Activated B cell treated with CpG ODN at 0.5 μM for 24 hours (primary cell): ENCODE measurements at regions of chr3 and their contacts with region 1.

Region 1: DNA sequence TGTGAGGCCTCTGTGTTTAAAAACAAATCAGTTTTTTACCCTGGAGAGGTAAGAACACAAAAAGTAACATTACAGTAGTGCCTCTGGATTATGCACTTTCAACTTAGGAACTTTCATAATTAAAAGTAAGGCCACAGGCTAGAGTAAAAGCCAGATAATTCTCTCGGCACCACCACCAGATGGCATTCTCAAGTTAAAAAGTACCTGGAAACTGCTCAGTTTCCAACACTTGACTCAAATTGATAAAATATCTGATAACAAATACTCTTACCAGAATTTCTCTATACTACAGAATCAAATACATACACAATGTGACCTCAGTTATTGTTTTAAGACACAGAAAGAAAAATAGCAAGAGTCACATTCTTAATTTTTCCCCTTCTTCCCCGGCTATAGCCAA is 19.9 kb downstream of the SPICE1 start:
- DNase-seq: no peak
- ATAC-seq: no peak
- H3K4me3 Mint-ChIP-seq: no peak overlapping the region
- H3K27ac Mint-ChIP-seq: no peak overlapping the region
- H3K4me1 Mint-ChIP-seq: no peaks in the 10 kb centered on the region
- H3K27me3 Mint-ChIP-seq: no peaks in the 10 kb centered on the region
- CTCF ChIP-seq: no peak

Region 2: GRCh38 chr3:113051302-113051711 is 443.7 kb before region 1 on chr3:
- CTCF ChIA-PET with region 1: no interaction called
- POLR2A ChIA-PET with region 1: no interaction called
- intact Hi-C with region 1: loop called (anchors 2 kb)
- DNase-seq: peak; percentile 68
- ATAC-seq: peak; percentile 99
- H3K4me3 Mint-ChIP-seq: no peak overlapping the region
- H3K27ac Mint-ChIP-seq: no peak overlapping the region
- H3K4me1 Mint-ChIP-seq: peaks cover 3% of the 10 kb centered on the region
- H3K27me3 Mint-ChIP-seq: no peaks in the 10 kb centered on the region
- CTCF ChIP-seq: no peak

Region 3: DNA sequence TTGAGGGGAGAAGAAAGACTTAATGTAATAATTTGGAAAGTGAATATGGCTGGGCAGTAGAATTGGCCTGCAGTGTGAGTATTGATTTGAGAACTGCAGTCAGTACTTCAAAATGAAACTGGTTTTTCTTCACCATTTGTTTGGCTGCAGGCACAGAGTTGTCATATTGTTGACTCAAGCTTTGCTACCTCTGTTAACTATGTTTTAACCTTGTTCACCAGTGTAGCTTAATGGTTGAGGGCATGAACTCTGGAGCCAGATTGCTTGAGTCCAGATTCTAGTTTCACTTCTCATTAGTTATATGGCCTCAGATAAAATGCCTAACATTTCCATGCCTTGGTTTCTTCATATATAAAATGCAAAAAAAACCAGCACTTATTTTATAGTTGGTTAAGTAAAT is 117.9 kb before region 1 on chr3:
- CTCF ChIA-PET with region 1: no interaction called
- POLR2A ChIA-PET with region 1: no interaction called
- intact Hi-C with region 1: no loop called
- DNase-seq: no peak
- ATAC-seq: no peak
- H3K4me3 Mint-ChIP-seq: no peak overlapping the region
- H3K27ac Mint-ChIP-seq: no peak overlapping the region
- H3K4me1 Mint-ChIP-seq: no peaks in the 10 kb centered on the region
- H3K27me3 Mint-ChIP-seq: no peaks in the 10 kb centered on the region
- CTCF ChIP-seq: no peak

Region 4: GRCh38 chr3:113531826-113532697 is 37.0 kb after region 1 on chr3 and contains the start of gene SIDT1:
- CTCF ChIA-PET with region 1: interaction called, 3 read pairs
- POLR2A ChIA-PET with region 1: interaction called, 3 read pairs
- intact Hi-C with region 1: loop called (anchors 1 kb)
- DNase-seq: peak; percentile 49
- ATAC-seq: peak; percentile 80
- H3K4me3 Mint-ChIP-seq: peak within 1 kb of the TSS; percentile 98
- H3K27ac Mint-ChIP-seq: peak within 1 kb of the TSS; percentile 100
- H3K4me1 Mint-ChIP-seq: peaks cover 47% of the 10 kb centered on the region
- H3K27me3 Mint-ChIP-seq: peaks cover 2% of the 10 kb centered on the region
- CTCF ChIP-seq: no peak
- total RNA-seq, gene SIDT1: 35.7 and 44.9 TPM in 2 replicates

Region 5: GRCh38 chr3:113552851-113553250 is 57.8 kb after region 1 on chr3:
- CTCF ChIA-PET with region 1: interaction called, 28 read pairs
- POLR2A ChIA-PET with region 1: no interaction called
- intact Hi-C with region 1: loop called (anchors 1 kb)
- DNase-seq: no peak
- ATAC-seq: peak; percentile 84
- H3K4me3 Mint-ChIP-seq: no peak overlapping the region
- H3K27ac Mint-ChIP-seq: no peak overlapping the region
- H3K4me1 Mint-ChIP-seq: peaks cover 17% of the 10 kb centered on the region
- H3K27me3 Mint-ChIP-seq: no peaks in the 10 kb centered on the region
- CTCF ChIP-seq: no peak

Region 6: GRCh38 chr3:113575206-113575605 is 80.2 kb after region 1 on chr3:
- CTCF ChIA-PET with region 1: interaction called, 82 read pairs
- POLR2A ChIA-PET with region 1: no interaction called
- intact Hi-C with region 1: loop called (anchors 1 kb)
- DNase-seq: no peak
- ATAC-seq: no peak
- H3K4me3 Mint-ChIP-seq: no peak overlapping the region
- H3K27ac Mint-ChIP-seq: peak overlapping the region; percentile 31
- H3K4me1 Mint-ChIP-seq: peaks cover 5% of the 10 kb centered on the region
- H3K27me3 Mint-ChIP-seq: no peaks in the 10 kb centered on the region
- CTCF ChIP-seq: no peak

Region 7: DNA sequence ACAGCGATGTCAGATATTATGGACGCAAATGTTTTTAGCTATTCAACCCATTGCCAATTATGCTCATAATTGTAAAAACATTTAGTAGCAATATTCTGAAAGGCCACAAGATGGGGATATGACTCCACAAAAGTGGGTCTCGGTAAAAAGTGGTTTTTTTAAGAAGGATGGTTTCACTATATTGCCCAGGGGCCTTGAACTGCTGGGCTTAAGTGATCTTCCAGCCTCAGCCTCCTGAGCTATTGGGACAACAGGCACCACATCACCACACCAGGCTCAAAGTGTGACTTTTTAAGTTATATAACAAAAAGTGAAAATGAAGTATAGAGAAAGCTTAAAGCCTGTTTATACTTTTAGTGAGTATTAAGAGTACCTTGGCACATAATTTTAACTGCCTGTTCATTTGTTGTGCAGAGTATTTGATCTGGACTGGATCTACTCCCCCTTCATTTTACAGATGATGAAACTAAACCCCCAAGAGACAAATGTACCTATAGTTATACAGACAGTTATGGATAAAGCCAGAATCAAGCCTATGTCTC is 241.6 kb after region 1 on chr3:
- CTCF ChIA-PET with region 1: interaction called, 5 read pairs
- POLR2A ChIA-PET with region 1: no interaction called
- intact Hi-C with region 1: loop called (anchors 2 kb)
- DNase-seq: no peak
- ATAC-seq: peak; percentile 86
- H3K4me3 Mint-ChIP-seq: no peak overlapping the region
- H3K27ac Mint-ChIP-seq: peak overlapping the region; percentile 76
- H3K4me1 Mint-ChIP-seq: peaks cover 40% of the 10 kb centered on the region
- H3K27me3 Mint-ChIP-seq: no peaks in the 10 kb centered on the region
- CTCF ChIP-seq: no peak

Region 8: GRCh38 chr3:113912552-113913236 is 417.7 kb after region 1 on chr3:
- CTCF ChIA-PET with region 1: interaction called, 8 read pairs
- POLR2A ChIA-PET with region 1: no interaction called
- intact Hi-C with region 1: loop called (anchors 1 kb)
- DNase-seq: no peak
- ATAC-seq: peak; percentile 97
- H3K4me3 Mint-ChIP-seq: peak overlapping the region; percentile 42
- H3K27ac Mint-ChIP-seq: no peak overlapping the region
- H3K4me1 Mint-ChIP-seq: peaks cover 6% of the 10 kb centered on the region
- H3K27me3 Mint-ChIP-seq: no peaks in the 10 kb centered on the region
- CTCF ChIP-seq: no peak